A549 (cell line): ENCODE measurements at regions of chr4 and their contacts with region 1.

Region 1: DNA sequence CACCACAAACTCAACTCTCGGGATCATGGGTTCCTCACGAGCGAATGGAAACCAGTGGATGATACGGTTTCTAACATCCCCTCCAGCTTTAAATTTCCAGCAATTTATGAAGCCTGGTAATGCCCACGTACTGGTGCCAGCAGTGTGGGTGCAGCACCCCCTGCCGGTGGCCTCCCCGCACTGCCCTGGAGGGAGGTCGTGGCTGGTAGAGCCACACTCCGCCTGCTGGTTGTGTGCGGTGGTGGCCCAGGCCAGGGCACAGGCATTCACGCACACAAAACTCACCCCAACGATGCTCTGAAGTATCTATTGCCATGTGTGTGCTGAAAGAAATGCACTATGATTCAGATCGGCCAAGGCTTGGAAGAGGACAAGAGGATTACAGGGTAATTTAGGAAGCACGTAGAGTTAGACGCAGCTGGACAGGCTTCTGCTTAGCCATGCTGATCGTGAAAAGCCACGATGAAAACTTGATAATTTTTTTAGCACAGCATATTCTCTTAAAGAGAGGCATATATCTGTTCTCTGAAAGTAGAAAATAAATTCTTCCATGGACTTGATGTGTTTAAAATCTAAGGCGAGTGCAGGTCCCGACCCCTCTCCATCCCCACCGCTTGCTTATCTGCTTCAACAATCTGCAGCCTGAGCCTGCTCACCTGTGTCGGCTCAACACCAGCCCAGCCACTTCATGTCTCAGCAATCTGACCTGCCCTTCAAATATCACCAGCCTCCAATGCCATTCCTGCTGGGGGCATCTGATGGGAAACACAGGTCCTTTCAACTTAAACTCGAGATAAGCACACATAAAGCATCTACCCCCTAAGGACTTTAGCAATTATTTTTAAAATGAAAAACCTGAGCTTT is 59.0 kb downstream of the SCD5 start:
- DNase-seq: peak; percentile 70 to 73
- ATAC-seq: peak; percentile 99 to 100
- H3K4me3 ChIP-seq: no peak overlapping the region
- H3K27ac ChIP-seq: no peak overlapping the region
- H3K4me1 ChIP-seq: no peaks in the 10 kb centered on the region
- CTCF ChIP-seq: peak; percentile 71
- EP300 ChIP-seq: no peak
- POLR2A ChIP-seq: no peak
- RAD21 ChIP-seq: peak; percentile 77 to 90

Region 2: GRCh38 chr4:82437285-82438005 is 302.1 kb before region 1 on chr4:
- CTCF ChIA-PET with region 1: no interaction called
- POLR2A ChIA-PET with region 1: no interaction called
- DNase-seq: no peak
- ATAC-seq: no peak
- H3K4me3 ChIP-seq: no peak overlapping the region
- H3K27ac ChIP-seq: no peak overlapping the region
- H3K4me1 ChIP-seq: peaks cover 6% of the 10 kb centered on the region; the same call in 1 of the 3 replicates
- CTCF ChIP-seq: no peak
- EP300 ChIP-seq: no peak
- POLR2A ChIP-seq: no peak
- RAD21 ChIP-seq: no peak

Region 3: GRCh38 chr4:82458729-82459128 is 280.8 kb before region 1 on chr4:
- CTCF ChIA-PET with region 1: interaction called, 15 read pairs
- POLR2A ChIA-PET with region 1: no interaction called
- DNase-seq: no peak
- ATAC-seq: no peak
- H3K4me3 ChIP-seq: no peak overlapping the region
- H3K27ac ChIP-seq: no peak overlapping the region
- H3K4me1 ChIP-seq: no peaks in the 10 kb centered on the region
- CTCF ChIP-seq: no peak
- EP300 ChIP-seq: no peak
- POLR2A ChIP-seq: no peak
- RAD21 ChIP-seq: no peak

Region 4: DNA sequence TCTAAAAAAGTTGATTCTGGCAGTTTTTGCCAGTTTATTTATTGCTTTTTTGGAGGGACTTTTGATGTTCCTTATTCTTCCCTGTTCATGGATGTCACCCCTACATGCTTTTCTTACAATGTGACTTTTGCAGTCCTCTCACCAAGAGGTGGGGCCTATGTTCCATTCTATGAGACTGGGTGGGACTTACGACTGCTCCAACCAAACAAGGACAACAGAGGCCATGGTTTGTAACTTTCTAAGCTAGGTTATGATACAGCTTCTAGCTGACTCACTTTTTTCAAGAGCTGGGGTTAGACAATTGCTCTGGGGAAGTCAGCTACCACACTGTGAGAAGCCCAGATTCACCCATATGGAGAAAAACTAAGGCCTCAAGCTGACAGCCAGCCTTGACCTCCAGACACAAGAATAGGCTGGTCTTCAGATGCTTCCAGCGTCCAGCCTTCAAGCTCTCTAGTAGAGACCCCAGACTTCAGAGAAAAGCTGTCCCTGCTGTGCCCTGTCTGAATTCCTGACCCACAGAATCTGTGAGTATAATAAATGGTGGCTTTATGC is 269.7 kb before region 1 on chr4:
- CTCF ChIA-PET with region 1: interaction called, 10 read pairs
- POLR2A ChIA-PET with region 1: no interaction called
- DNase-seq: no peak
- ATAC-seq: no peak; a peak in 1 of 6 replicates
- H3K4me3 ChIP-seq: no peak overlapping the region
- H3K27ac ChIP-seq: no peak overlapping the region
- H3K4me1 ChIP-seq: no peaks in the 10 kb centered on the region
- CTCF ChIP-seq: no peak
- EP300 ChIP-seq: no peak
- POLR2A ChIP-seq: no peak
- RAD21 ChIP-seq: no peak

Region 5: GRCh38 chr4:82865592-82865991 is 126.0 kb after region 1 on chr4:
- CTCF ChIA-PET with region 1: no interaction called
- POLR2A ChIA-PET with region 1: no interaction called
- DNase-seq: peak in 1 of 2 experiments; percentile 49
- ATAC-seq: peak; percentile 40 to 64; a peak in 1 of 6 replicates
- H3K4me3 ChIP-seq: no peak overlapping the region
- H3K27ac ChIP-seq: no peak overlapping the region
- H3K4me1 ChIP-seq: peaks cover 14% of the 10 kb centered on the region
- CTCF ChIP-seq: no peak
- EP300 ChIP-seq: no peak
- POLR2A ChIP-seq: no peak
- RAD21 ChIP-seq: no peak